Activated T-helper 1 cell treated with anti-CD3 and anti-CD28 coated beads, Interleukin-12 subunit alpha, Interleukin-12 subunit beta, Interleukin-2, Interleukin-4 antibody, amounts not matched to agents 30 ng/mL and 10 ng/mL and 1 ng/mL, durations not matched to agents 14 hours and 24 hours and 36 hours (primary cell): ENCODE measurements at regions of chr7 and their contacts with region 1.

Region 1: DNA sequence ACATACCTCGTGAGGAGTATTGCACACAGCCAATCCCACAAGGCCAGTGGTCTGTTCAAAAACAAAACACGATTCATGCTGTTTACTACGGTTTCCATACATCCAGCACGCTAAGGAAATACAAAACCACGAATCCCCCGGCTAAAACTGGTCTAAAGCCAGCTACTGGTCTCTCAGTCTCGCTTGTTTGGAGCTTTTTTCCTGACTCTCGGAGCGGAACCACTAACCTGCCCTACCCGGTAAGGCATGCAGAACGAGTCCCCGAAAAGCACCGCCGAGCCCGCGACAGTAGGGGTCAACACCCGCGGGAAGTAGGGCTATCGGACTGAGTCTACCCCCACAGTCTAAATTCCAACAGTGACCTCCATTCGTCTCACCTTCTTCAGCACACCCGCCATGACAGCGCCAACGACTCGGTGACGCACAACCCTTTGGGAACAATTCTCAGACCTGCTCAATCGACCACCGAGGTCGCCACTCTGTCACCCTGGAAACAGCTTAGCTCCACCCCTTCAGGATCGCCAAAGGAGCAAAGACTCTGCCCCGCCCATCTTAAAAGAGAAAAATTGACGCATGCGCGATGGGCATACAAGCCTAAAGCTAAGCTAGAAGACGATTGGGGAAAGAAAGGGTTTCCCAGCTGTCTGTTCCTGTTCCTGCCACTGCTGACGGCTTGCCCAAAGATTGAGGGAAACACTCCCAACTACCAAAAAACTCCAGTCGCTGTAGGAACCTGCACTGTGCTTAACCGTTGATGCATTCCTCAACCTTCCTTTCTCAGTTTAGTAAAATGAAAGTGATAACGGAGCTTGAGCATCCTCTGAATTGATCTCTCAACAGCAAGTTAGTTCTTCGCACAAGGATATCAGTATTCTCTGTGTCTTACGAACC is at the start of gene NDUFA5:
- DNase-seq: peak; percentile 96
- H3K4me3 Mint-ChIP-seq: no peak within 1 kb of the TSS
- H3K27ac Mint-ChIP-seq: no peak within 1 kb of the TSS
- H3K4me1 Mint-ChIP-seq: no peaks in the 10 kb centered on the region
- H3K27me3 Mint-ChIP-seq: no peaks in the 10 kb centered on the region
- total RNA-seq, gene NDUFA5: 49.4 and 51.5 TPM in 2 replicates

Region 2: DNA sequence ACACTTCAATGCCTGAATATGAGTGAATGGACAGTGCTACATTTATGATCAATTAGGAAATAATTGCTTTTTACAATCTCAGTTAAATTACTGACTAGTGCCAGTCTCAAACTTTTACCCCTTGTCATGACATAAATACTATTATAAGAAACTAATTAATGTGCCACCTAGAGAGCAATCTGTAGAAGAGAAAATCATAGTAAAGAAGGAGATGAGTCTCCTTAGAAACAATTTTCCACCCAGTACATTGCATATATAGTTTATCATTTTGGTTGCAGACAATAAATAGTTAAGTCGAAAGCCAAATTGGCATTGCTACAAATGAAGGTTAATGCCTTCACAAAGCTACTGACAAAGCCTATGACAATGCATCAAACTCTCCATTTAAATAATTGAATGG is 426.5 kb before region 1 on chr7:
- intact Hi-C with region 1: no loop called
- DNase-seq: no peak
- H3K4me3 Mint-ChIP-seq: no peak overlapping the region
- H3K27ac Mint-ChIP-seq: no peak overlapping the region
- H3K4me1 Mint-ChIP-seq: no peaks in the 10 kb centered on the region
- H3K27me3 Mint-ChIP-seq: no peaks in the 10 kb centered on the region

Region 3: GRCh38 chr7:123190109-123190831 is 367.4 kb before region 1 on chr7:
- intact Hi-C with region 1: loop called (anchors 1 kb)
- DNase-seq: peak; percentile 49
- H3K4me3 Mint-ChIP-seq: no peak overlapping the region
- H3K27ac Mint-ChIP-seq: peak overlapping the region; percentile 79
- H3K4me1 Mint-ChIP-seq: peaks cover 11% of the 10 kb centered on the region
- H3K27me3 Mint-ChIP-seq: no peaks in the 10 kb centered on the region

Region 4: GRCh38 chr7:123494193-123494796 is 63.3 kb before region 1 on chr7:
- intact Hi-C with region 1: loop called (anchors 5 kb)
- DNase-seq: no peak
- H3K4me3 Mint-ChIP-seq: no peak overlapping the region
- H3K27ac Mint-ChIP-seq: no peak overlapping the region
- H3K4me1 Mint-ChIP-seq: no peaks in the 10 kb centered on the region
- H3K27me3 Mint-ChIP-seq: peaks cover 6% of the 10 kb centered on the region

Region 5: DNA sequence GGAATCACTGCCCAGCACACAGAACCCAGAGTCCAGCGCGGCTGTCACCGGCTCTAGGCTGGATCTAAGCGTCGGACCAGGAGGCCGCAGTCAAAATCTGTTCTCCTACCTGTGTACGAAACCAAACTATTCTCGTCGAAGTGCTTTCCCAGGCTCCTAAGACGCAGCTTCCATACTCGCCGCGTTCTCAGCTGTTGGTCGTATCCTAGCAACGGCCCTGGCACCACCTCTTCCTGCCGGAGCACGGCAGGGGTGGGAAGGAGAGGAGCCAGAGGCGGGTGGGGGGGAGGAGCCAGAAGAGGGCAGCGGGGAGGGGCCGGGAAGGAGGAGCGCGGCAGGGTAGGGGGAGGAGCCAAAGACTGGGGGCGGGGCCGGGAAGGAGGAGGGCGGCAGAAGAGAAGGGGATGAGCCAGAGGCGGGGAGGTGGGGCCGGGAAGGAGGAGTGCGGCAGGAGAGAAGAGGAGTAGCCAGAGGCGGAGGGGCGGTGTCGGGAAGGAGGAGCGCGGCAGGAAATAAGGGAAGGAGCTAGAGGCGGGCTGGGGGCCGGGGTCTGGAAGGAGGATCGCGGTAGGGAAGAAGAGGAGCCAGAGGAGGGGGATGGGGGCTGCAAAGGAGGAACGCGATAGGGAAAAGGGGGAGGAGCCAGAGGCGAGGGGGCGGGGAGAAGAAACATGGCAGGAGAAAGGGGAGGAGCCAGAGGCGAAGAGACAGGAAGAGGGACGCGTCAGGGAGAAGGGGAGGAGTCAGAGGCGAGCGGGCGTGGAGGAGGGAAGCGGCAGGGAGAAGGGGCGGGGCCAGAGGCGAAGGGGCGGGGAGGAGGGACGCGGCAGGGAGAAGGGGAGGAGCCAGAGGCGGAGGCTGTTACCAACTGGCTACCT is 23.0 kb before region 1 on chr7 and contains the start of gene IQUB:
- intact Hi-C with region 1: loop called (anchors 1 kb)
- DNase-seq: peak; percentile 89
- H3K4me3 Mint-ChIP-seq: peak within 1 kb of the TSS; percentile 91
- H3K27ac Mint-ChIP-seq: peak within 1 kb of the TSS; percentile 88
- H3K4me1 Mint-ChIP-seq: peaks cover 26% of the 10 kb centered on the region
- H3K27me3 Mint-ChIP-seq: peaks cover 30% of the 10 kb centered on the region
- total RNA-seq, gene IQUB: 0.44 TPM in 1 of 2 replicates, not detected in the other

Region 6: GRCh38 chr7:123601530-123601929 is 43.9 kb after region 1 on chr7 and contains the start of gene ASB15:
- intact Hi-C with region 1: no loop called
- DNase-seq: no peak
- H3K4me3 Mint-ChIP-seq: no peak within 1 kb of the TSS
- H3K27ac Mint-ChIP-seq: no peak within 1 kb of the TSS
- H3K4me1 Mint-ChIP-seq: no peaks in the 10 kb centered on the region
- H3K27me3 Mint-ChIP-seq: peaks cover 10% of the 10 kb centered on the region
- total RNA-seq, gene ASB15: not detected in 2 replicates

Region 7: DNA sequence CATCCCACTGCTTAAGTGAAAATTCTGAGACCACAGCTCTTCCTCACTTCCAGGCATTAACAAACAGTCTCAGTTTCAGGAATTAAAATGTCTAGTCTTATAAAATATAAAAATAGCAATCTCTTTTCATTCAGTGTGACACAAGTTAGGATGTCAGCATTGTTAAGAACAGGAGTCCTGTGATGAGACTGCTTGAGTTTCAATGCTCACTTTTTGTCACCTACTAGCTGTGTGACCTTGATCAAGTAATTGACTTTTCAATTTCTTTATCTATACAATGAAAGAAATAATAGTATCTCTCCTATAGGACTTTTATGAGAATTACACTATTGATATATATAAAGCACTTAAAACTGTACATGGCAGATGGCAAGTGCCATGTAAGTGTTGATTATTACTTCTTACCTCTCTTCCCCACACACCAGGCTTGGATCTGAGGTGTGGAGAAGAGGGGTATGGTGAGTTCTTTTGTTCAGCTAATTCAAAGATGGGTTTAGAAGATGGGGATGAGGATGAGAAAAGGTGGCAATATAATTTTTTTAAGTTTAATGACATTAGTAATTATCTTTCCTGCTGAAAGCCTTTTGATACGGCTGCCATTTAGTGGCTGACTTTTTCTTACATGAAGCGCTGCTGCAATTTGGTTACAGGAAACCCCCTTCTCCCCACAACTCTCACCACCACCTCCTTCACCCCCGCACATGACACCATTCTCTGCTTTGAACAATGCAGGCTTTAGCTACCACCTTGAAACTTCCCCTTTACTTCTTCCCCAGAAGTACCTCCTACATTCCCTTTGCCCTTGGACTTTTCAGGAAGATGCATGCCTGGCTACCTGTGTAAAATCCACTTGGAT is 266.5 kb after region 1 on chr7:
- intact Hi-C with region 1: loop called (anchors 2 kb)
- DNase-seq: peak; percentile 44
- H3K4me3 Mint-ChIP-seq: peak overlapping the region; percentile 38
- H3K27ac Mint-ChIP-seq: peak overlapping the region; percentile 77
- H3K4me1 Mint-ChIP-seq: peaks cover 25% of the 10 kb centered on the region
- H3K27me3 Mint-ChIP-seq: peaks cover 7% of the 10 kb centered on the region

Region 8: DNA sequence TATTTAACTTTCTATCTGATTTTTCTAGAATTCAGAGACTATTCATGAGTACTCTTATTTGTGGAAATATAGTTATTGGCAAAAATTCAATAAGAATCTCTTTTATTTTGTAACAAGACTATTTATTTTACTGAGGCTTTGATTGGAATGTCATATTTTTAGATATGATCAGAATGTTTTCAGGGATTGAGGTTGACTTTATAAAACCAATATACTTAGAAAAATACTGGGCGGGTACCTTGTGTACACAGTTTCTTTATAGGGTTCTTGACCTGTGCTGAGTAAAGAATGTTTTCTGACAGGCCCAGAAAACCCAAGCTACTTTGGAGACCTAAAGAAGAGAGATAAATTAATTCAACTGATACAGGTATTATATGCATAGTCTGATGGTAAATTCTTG is 343.4 kb after region 1 on chr7:
- intact Hi-C with region 1: no loop called
- DNase-seq: no peak
- H3K4me3 Mint-ChIP-seq: no peak overlapping the region
- H3K27ac Mint-ChIP-seq: no peak overlapping the region
- H3K4me1 Mint-ChIP-seq: no peaks in the 10 kb centered on the region
- H3K27me3 Mint-ChIP-seq: no peaks in the 10 kb centered on the region

Region 9: GRCh38 chr7:124310934-124311390 is 753.3 kb after region 1 on chr7:
- intact Hi-C with region 1: no loop called
- DNase-seq: no peak
- H3K4me3 Mint-ChIP-seq: no peak overlapping the region
- H3K27ac Mint-ChIP-seq: no peak overlapping the region
- H3K4me1 Mint-ChIP-seq: no peaks in the 10 kb centered on the region
- H3K27me3 Mint-ChIP-seq: no peaks in the 10 kb centered on the region

Region 10: GRCh38 chr7:124929467-124930172 is 1372.0 kb after region 1 on chr7 and contains the start of gene POT1:
- intact Hi-C with region 1: loop called (anchors 1 kb)
- DNase-seq: peak; percentile 95
- H3K4me3 Mint-ChIP-seq: peak within 1 kb of the TSS; percentile 97
- H3K27ac Mint-ChIP-seq: peak within 1 kb of the TSS; percentile 87
- H3K4me1 Mint-ChIP-seq: peaks cover 39% of the 10 kb centered on the region
- H3K27me3 Mint-ChIP-seq: peaks cover 2% of the 10 kb centered on the region
- total RNA-seq, gene POT1: 27.1 and 31.1 TPM in 2 replicates